Posterior vena cava (tissue), 2 donors: ENCODE measurements at regions of chr1 and their contacts with region 1.

Region 1: DNA sequence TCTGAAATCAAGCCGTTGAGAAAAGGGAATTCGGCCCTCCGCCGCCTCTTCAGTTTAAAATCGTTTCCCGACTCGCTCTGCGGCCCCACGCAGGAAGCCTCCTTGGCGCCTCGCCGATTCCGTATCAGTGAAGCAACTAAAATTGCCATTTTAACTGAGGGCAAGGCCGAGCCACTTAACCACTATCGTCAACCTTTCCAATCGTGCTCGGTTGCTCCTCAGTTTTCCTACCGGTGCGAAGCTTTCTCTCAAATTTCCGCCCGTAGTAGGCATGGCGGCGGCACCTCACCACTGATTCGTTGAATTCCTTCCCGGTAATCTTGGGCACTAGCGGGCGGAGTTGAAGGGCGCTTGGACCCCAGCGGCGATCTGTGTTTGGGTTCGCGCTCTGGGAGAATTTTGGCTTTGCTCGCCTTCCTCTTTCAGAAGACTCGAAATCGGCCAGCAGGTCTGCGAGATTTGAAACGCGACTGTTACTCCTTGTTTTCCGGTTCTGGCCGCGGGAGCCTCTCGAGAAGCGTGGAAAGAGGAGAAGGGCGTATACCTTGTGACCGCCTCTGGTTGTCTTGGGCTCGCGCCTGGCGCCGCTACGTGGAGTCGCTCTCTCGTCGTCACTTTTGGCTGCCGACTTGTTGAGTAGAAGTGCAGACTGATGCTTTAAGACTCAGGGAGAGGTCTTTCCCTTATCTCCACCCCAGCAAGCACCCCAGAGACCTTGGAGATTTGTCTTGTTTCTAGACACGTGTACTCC is at the starts of genes CENPL and DARS2:
- DNase-seq: peak; percentile 99
- total RNA-seq, gene CENPL: 5.4 to 8.4 TPM
- total RNA-seq, gene DARS2: 8.7 to 8.8 TPM

Region 2: DNA sequence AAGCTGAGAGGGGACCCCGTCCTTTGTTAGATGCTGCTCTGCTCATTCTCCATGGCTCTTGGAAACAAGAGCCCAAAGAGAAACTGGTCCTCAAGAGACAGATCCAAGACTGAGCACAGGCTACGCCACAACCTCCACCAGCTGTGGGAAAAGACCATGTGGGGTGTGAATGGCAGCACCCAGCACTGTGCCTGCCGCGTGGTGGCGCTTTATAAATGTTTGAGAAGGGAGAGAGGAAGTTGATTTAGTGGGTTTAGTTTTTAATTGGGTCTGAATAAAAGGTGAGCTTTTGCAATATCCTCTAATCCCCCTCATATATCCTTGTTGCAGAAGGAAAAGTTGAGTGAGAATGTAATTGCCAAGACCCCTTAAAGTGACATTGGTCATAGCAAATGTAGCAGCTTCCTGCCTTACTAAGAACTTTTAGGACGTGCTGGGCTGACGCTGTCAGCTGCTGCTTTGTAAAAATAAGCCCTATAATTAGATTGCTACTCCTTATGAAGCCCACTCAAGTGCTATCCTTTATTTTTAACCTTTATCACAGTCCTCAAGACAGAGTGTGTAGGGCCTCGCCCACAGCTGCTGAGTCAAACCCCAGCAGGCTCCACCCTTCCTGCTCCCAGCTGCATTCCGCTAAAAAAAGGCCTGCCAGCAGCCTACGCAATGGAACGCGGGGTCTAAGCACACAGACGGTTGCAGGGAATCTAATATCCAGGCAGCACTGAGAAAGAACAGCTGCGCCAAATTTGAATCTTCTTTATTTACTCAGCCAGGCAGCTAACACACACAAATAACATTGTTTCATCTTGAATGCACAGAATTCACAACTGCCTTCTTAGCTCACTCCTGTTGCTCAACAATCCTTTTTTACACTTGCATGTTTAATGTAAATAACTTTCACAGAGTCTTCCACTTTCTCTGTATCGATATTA is 394.8 kb before region 1 on chr1:
- intact Hi-C with region 1: loop called in 1 of 2 experiments (anchors 10 kb)
- DNase-seq: peak; percentile 97

Region 3: GRCh38 chr1:173870252-173871075 is 46.0 kb after region 1 on chr1:
- intact Hi-C with region 1: loop called in 1 of 2 experiments (anchors 2 kb)
- DNase-seq: no peak

Region 4: GRCh38 chr1:173925306-173926242 is 101.1 kb after region 1 on chr1:
- intact Hi-C with region 1: no loop called
- DNase-seq: no peak